GM10248 (cell line): ENCODE measurements at regions of chr7 and their contacts with region 1.

Region 1: DNA sequence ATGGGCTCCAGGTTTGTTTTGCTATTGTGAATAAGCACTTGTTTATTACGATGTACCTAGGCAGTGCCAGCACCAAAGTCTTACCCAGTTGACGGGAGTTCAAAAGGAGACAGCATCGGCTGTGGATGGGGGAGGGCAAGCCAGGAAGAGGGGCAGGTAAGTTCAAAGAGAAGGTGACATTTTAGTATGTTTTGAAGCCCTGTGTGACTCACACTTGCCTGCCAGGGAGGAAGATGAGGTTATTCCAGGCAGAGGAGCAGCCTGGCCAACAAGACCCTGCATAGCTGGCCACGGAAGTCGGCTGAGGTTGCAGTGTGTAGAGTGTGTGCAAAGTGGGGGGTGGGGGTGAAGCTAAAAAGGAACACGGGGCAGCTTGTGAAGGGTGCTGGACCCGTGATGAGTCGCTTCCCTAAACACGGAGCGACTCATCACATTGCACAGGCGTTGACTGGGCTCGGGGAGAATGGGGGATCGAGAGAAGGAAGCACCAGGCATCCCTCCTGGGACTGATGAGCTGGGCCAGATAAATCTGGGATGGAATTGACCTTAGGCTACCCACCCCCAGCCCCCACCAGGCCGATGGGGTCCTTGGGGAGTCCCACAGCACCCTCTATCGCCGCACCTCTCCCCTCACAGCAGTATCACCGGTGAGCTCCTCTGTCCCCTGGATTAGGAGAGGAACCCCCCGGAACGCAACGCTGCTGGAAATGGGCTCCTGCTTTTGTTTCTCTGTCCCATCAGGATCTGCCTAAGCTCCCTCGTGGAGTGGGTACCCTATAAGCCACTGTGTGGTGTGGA is 97.9 kb upstream of the IKZF1 start:
- DNase-seq: no peak
- CTCF ChIP-seq: no peak

Region 2: GRCh38 chr7:49692516-49692915 is 514.1 kb before region 1 on chr7:
- CTCF ChIA-PET with region 1: no interaction called
- POLR2A ChIA-PET with region 1: no interaction called
- DNase-seq: no peak
- CTCF ChIP-seq: no peak

Region 3: DNA sequence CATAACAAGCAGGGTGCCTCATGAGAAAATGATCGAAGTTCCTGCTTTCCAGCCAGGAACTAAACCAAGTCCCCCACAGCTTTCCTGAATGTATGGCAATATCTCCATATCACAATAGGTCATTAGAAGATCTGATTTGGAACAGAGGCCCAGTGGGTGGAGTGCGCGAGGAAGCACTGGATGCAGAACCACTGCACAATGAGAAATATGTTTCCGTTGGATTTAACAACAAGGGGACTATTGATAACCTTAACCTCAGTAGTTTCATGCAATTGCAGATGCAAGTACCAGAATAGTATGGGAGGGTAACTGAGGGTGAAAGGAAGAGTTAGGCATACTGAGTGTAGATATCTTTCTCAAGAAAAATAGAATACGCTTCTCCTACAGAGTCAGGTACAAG is 158.9 kb before region 1 on chr7:
- CTCF ChIA-PET with region 1: no interaction called
- POLR2A ChIA-PET with region 1: no interaction called
- DNase-seq: no peak
- CTCF ChIP-seq: no peak

Region 4: GRCh38 chr7:50182759-50183158 is 23.9 kb before region 1 on chr7:
- CTCF ChIA-PET with region 1: interaction called, 30 read pairs
- POLR2A ChIA-PET with region 1: no interaction called
- DNase-seq: no peak
- CTCF ChIP-seq: no peak

Region 5: GRCh38 chr7:50229964-50230363 is 23.3 kb after region 1 on chr7:
- CTCF ChIA-PET with region 1: interaction called, 11 read pairs
- POLR2A ChIA-PET with region 1: no interaction called
- DNase-seq: no peak
- CTCF ChIP-seq: peak; percentile 22

Region 6: DNA sequence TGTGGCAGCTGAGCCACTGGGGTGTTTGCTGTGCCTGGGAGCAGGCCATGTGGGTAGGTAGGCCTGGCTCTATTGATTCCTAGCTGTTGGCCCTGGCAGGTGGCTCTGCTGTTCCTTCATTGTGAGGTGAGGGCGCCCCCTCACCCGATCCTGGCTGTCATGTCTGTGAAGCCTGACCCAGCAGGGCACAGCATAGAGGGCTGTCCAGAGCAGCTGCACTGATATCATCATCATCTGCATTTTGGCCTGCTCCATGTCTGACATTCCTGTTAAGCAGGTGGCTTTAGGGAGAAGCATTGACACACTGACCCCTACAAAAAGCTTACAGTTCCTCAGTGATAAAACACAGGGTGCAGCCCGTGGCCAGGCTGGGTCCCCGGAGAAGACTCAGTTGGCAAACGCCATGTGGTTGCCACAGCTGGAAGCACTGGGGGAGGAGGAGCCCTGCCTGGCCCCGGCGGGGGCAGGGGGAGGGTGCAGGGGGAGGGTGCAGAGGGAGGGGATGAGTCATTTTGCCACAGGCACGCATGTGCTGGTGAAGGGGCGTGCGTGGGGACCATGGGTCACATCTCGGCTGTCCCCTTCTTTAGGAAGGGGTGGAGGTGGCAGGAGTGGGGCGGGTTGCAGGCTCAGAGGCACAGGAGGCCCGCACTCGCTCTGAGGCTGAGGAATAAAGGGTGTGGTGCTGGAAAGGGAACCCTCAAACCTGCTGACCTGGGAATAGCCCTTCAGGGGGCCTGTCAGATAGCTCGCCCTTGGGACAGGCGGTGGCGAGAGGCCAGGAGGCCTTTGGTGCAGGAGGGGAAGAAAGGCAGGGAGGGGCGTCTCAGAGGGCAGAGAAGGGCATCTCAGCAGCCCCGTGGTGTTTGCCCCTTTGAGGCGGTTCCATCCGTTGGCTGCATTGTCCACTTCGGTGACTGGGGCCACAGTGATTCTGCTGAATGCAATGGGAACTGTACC is 129.4 kb after region 1 on chr7:
- CTCF ChIA-PET with region 1: interaction called, 13 read pairs
- POLR2A ChIA-PET with region 1: no interaction called
- DNase-seq: no peak
- CTCF ChIP-seq: peak; percentile 29

Region 7: DNA sequence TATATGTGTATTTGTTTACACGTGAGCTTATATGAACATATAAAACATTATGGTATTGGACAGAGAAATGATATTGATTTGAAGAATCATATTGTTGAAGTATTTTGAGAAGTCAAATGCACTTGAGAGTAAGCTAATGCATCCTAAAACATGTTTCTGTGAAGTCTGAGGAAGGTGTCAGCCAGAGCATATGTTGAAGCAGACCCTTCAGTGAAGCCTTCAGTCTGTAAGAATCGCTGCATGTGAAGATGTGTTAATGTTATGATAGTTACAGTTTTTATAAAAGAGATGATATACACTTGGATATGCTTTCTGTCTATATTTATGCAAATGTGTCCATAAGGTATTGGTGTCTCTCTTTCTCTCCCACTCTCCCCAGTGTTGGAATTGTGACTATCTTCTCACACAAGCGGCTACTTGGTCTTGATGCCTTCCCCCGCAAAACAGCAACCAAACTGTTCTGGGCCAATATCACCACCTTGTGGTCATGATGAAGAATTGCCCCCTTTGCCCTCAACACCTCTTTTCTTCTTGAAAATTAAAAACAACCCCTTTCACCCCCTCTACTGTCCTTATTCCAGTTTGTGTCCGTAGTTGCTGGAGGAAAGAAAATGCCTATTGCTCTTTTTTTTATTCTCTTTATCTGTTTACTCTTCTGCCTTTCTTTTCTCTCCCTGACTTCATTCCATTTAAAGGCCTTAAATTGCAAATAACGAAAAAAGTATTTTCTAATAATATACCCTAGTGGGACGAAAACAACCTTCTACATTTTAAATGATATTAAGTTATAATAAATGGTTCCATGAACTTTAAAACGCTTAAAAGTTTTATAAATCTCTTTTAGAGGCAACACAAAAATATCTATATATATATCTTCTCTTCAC is 162.7 kb after region 1 on chr7:
- CTCF ChIA-PET with region 1: interaction called, 136 read pairs
- POLR2A ChIA-PET with region 1: no interaction called
- DNase-seq: peak; percentile 41
- CTCF ChIP-seq: peak; percentile 64